ENCODE measurements at regions of chr19 and their contacts with region 1.

Region 1: GRCh38 chr19:39996811-39997594 is at the start of gene ZNF546:
- DNase-seq: peak; percentile 87
- H3K4me3 Mint-ChIP-seq: peak within 1 kb of the TSS; percentile 99
- H3K27ac Mint-ChIP-seq: peak within 1 kb of the TSS; percentile 100
- H3K4me1 Mint-ChIP-seq: peaks cover 41% of the 10 kb centered on the region
- H3K27me3 Mint-ChIP-seq: no peaks in the 10 kb centered on the region
- total RNA-seq, gene ZNF546: 6.1 and 7.1 TPM in 2 replicates

Region 2: DNA sequence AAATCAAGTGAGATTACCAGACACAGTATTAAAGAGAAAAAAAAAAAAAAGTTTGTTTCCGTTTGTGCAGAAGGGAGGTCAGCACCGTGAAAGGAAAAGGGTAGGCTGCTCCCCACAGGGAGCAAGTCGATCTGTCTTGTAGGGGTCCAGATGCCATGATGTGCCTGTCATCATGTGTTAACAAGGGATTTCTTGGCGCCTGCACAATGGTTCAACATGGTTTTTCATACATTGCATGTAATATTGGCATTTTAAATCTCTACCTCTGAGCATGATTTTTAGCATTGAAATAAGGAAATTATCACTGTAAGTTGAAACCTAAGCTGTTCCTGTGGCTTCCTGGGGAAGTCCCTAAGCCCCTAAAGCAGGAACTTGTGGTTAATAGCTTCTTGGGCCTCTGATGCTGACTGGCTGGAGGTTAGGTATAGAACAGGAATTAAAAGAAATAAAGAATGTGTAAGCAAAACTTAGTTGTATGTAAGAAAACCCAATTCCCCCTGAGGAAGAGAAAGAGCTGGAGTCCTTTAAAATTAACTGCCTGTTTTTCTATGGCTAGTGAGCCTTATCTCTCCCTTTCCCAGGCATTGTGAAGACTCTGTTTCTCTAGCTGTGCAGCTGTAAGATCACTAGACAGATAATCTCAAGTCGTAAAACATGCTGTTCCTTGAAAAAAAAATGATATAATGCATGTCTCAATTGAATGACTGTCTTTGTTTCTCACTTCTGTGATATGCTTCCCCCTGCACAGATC is 55.2 kb before region 1 on chr19:
- intact Hi-C with region 1: no loop called
- DNase-seq: peak; percentile 45
- H3K4me3 Mint-ChIP-seq: peak overlapping the region; percentile 63
- H3K27ac Mint-ChIP-seq: peak overlapping the region; percentile 86
- H3K4me1 Mint-ChIP-seq: peaks cover 77% of the 10 kb centered on the region
- H3K27me3 Mint-ChIP-seq: peaks cover 2% of the 10 kb centered on the region

Region 3: GRCh38 chr19:40055832-40056504 is 59.0 kb after region 1 on chr19 and contains the start of gene ZNF780B:
- intact Hi-C with region 1: loop called (anchors 1 kb)
- DNase-seq: peak; percentile 69
- H3K4me3 Mint-ChIP-seq: peak within 1 kb of the TSS; percentile 97
- H3K27ac Mint-ChIP-seq: peak within 1 kb of the TSS; percentile 92
- H3K4me1 Mint-ChIP-seq: peaks cover 42% of the 10 kb centered on the region
- H3K27me3 Mint-ChIP-seq: peaks cover 12% of the 10 kb centered on the region
- total RNA-seq, gene ZNF780B: 25.8 and 29.0 TPM in 2 replicates

Region 4: GRCh38 chr19:40090241-40091204 is 93.5 kb after region 1 on chr19 and contains the start of gene ZNF780A:
- intact Hi-C with region 1: loop called (anchors 1 kb)
- DNase-seq: peak; percentile 73
- H3K4me3 Mint-ChIP-seq: peak within 1 kb of the TSS; percentile 100
- H3K27ac Mint-ChIP-seq: peak within 1 kb of the TSS; percentile 99
- H3K4me1 Mint-ChIP-seq: peaks cover 43% of the 10 kb centered on the region
- H3K27me3 Mint-ChIP-seq: peaks cover 3% of the 10 kb centered on the region
- total RNA-seq, gene ZNF780A: 14.8 and 16.7 TPM in 2 replicates

Region 5: DNA sequence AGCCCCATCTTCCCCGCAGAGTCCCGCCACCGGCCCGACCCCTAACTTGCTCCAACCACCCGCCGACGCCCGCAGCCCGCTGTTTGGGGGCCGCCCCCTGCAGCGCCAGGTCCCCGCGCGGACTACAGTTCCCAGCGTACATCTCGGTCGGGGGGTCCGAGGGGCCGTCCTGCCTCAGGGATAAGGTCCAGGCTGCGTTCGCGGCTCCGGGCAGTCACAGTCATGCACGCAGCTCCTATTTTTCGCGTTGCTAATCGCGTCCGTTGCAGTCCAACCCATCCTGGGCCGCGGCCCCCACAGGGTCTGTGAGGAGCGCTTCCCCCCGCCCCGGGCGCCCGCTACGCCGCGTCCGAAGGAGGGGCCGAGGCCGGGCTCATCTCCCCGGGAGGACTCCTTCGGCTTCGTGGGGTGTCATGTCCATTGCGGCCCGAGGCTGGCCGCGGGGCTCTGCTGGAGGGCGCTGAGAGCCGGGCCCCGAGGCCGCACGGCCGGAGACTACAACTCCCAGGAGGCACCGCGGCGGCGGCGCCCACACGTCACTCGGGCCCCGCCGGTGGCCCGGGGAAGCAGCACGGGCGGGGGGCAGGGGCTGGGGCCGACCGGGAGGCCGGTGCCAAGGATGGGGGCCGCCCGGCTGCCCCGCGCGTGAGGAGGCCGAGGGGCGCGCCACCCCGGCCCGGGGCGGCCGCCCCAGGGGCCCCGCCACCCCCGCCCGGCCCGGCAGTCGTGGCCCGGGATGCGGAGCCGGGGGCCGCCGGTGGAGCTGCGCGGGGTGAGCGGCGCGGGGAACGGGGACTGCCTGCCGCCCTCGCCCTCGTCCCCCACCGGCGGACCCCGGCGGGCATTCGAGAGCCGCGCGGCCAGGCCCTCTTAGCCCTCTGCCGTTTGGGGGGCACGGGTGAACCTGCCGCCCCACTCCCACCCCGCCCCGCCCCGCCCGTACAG is 194.2 kb after region 1 on chr19 and contains the start of gene MAP3K10:
- intact Hi-C with region 1: loop called (anchors 2 kb)
- DNase-seq: peak; percentile 73
- H3K4me3 Mint-ChIP-seq: peak within 1 kb of the TSS; percentile 90
- H3K27ac Mint-ChIP-seq: peak within 1 kb of the TSS; percentile 93
- H3K4me1 Mint-ChIP-seq: peaks cover 34% of the 10 kb centered on the region
- H3K27me3 Mint-ChIP-seq: peaks cover 8% of the 10 kb centered on the region
- total RNA-seq, gene MAP3K10: 13.8 and 19.8 TPM in 2 replicates